ENCODE measurements at regions of chr1 and their contacts with region 1.

Region 1: GRCh38 chr1:21344750-21345443 is 54.6 kb upstream of the ECE1 start:
- DNase-seq: peak; percentile 56 to 84
- ATAC-seq: peak; percentile 40
- H3K4me3 ChIP-seq: peak overlapping the region; percentile 78 to 86
- H3K27ac ChIP-seq: peak overlapping the region; percentile 79 to 87
- H3K4me1 ChIP-seq: peaks cover 0 to 2% of the 10 kb centered on the region in 2 donors
- H3K27me3 ChIP-seq: no peaks in the 10 kb centered on the region

Region 2: DNA sequence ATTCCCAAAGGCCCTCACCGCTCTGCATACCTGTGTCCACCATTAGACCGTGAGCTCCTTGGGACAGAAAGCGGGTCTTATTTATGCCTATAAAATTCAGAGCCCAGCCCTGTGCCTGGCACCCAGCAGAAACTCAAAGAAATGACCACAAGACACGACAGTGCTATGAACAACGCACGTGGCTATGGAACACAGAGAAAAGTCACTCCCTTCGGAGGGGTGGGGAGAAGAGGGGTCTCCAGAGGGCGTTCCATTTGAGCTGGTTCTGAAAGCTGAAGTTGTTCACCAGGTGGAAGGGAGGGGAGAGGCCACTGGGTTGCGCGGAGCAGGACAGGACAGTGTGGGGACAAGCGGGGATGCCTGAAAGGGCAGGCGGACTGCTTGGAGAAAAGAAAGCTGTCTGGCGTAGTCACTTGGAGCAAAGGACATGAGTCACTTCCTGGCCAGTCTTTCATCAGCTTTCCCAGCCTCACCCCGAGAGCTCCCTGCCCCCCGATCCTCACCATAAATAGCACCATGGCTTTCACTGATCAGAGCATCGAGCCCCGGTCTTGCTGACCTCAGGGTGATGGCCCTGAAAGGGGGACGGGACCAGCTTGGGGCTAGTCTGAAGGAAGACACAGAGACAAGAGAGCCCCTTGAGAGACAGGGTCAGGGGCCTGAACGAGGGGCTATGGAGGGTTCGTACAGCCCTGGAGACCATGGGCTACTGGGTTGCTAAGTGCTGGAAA is 83.2 kb before region 1 on chr1:
- intact Hi-C with region 1: loop called in 1 of 2 experiments (anchors 2 kb)
- DNase-seq: peak; percentile 88 to 91
- ATAC-seq: peak; percentile 91
- H3K4me3 ChIP-seq: no peak overlapping the region
- H3K27ac ChIP-seq: peak overlapping the region; percentile 90 to 94
- H3K4me1 ChIP-seq: no peaks in the 10 kb centered on the region
- H3K27me3 ChIP-seq: no peaks in the 10 kb centered on the region

Measured in aorta (tissue), 5 donors.